Caco-2 (cell line): ENCODE measurements at regions of chr3 and their contacts with region 1.

Region 1: DNA sequence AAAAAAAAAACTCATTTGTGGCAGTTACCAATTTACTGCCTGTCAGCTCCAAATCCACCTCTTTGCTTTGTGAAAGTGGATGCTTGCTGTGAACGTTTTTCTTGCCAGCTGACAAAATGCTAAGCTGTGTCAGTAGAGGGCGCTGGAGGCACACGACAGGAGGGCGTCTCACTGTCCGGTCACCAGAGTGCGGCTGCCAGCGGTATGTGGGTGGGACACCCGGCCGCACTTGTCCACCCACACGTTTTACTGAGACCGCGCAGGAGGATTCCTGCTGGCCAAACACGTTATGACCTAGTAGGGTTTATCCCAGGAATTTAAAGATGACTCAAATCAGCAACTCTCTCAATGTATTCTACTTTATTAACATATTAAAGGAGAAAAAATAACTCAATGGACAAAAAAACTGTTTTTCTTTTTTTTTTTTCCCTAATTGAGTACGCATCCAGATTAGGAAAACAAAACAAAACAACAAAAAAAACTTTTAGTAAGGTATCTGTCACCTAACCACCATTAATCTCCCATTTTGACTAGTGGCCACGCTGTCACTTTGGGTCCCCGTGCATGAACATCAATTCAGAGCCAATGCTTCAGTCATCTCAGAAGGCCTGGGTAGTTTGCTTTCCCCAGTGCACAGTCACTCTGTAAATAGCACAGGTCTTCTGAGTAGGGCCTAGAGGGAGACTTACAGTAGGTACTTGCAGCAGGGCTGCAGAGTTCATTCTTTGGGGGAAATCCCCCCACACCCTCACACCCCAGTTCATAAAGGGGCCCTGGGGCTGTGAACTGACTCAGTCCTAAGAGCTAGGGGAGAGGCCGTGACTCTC is 43.8 kb upstream of the RPL35A start:
- DNase-seq: peak; percentile 88 to 89
- H3K4me3 ChIP-seq: no peak overlapping the region
- H3K4me3 Mint-ChIP-seq: no peak overlapping the region
- H3K27ac Mint-ChIP-seq: no peak overlapping the region
- H3K4me1 ChIP-seq: no peaks in the 10 kb centered on the region
- H3K4me1 Mint-ChIP-seq: no peaks in the 10 kb centered on the region
- H3K27me3 ChIP-seq: no peaks in the 10 kb centered on the region
- H3K27me3 Mint-ChIP-seq: no peaks in the 10 kb centered on the region
- CTCF ChIP-seq: peak; percentile 88 to 92

Region 2: GRCh38 chr3:197580253-197580691 is 326.0 kb before region 1 on chr3:
- CTCF ChIA-PET with region 1: no interaction called
- POLR2A ChIA-PET with region 1: no interaction called
- intact Hi-C with region 1: no loop called
- DNase-seq: no peak
- H3K4me3 ChIP-seq: no peak overlapping the region
- H3K4me3 Mint-ChIP-seq: no peak overlapping the region
- H3K27ac Mint-ChIP-seq: no peak overlapping the region
- H3K4me1 ChIP-seq: peaks cover 15% of the 10 kb centered on the region
- H3K4me1 Mint-ChIP-seq: no peaks in the 10 kb centered on the region
- H3K27me3 ChIP-seq: no peaks in the 10 kb centered on the region
- H3K27me3 Mint-ChIP-seq: no peaks in the 10 kb centered on the region
- CTCF ChIP-seq: no peak

Region 3: DNA sequence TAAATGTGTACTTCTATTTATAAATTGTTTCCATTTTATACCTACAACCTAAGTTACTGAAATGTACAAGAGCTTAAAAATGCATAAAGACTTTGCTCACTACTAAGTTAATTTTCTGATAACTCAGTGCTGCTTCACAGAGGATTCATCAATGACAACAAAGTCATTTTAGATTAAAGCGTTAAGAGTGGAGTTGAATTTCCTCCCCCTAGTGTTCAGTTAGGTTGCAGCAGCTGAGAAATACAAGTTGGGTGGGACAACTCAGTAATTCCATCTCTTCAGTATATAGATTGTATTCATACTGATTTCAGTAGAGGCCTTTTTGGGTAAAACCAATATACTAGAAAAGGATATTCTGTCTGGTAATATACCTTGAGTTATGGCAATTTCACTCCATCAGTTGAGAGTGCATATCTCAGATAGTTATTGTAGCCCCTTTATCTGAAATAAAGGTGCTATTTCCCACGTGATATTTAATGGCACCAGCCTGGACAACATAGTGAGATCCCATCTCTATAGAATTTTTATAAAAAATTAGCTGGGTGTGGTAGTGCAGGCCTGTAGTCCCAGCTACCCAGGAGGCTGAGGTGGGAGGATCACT is 36.8 kb after region 1 on chr3:
- CTCF ChIA-PET with region 1: interaction called, 7 read pairs
- POLR2A ChIA-PET with region 1: no interaction called
- intact Hi-C with region 1: loop called (anchors 1 kb)
- DNase-seq: peak in 1 of 2 experiments; percentile 44
- H3K4me3 ChIP-seq: no peak overlapping the region
- H3K4me3 Mint-ChIP-seq: no peak overlapping the region
- H3K27ac Mint-ChIP-seq: no peak overlapping the region
- H3K4me1 ChIP-seq: no peaks in the 10 kb centered on the region
- H3K4me1 Mint-ChIP-seq: no peaks in the 10 kb centered on the region
- H3K27me3 ChIP-seq: no peaks in the 10 kb centered on the region
- H3K27me3 Mint-ChIP-seq: peaks cover 3% of the 10 kb centered on the region
- CTCF ChIP-seq: peak; percentile 69 to 75

Region 4: DNA sequence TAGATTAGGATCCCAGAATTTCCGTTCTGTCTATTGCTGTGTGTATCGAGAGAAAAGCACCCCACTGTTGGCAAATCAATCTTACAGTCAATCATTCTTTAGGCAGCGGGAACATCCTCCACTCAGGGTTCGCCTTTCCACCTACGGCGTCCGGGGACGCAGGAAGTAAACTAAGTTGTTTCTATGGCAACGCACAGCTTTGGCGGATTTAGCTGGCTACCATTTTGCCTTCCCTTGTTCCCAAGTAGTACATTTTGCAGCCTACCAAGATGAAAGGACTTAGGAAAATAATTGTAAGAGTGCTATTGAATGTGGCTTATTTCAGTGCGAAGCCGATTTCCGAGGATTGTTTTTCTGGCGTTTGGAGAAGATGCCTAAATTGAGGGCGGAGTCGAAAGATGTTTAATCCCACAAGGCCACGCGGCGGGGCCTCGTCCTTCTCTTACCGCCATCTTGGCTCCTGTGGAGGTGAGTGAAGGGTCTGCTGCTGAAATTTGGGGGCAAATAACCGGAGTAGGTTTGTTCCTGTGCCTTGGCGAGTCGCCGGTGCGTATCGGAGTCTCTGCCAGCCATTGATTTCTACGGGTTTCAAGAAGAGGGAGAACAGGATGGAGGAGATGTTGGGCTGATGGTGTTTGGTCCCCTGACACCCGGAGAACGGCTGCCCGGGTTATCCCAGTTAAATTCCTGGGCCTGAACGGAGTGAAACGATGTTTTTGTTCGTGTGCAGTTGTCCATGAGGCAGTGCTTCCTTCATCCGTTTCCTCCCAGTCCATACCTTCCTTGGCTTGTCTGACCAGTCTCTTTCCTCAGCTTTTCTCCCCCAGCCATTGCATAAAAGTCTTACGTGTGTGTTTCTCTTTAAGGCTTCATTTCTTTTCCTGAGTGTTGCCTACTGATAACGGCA is 43.8 kb after region 1 on chr3 and contains the start of gene RPL35A:
- CTCF ChIA-PET with region 1: interaction called, 6 read pairs
- POLR2A ChIA-PET with region 1: no interaction called
- intact Hi-C with region 1: loop called (anchors 2 kb)
- DNase-seq: peak; percentile 90 to 91
- H3K4me3 ChIP-seq: peak within 1 kb of the TSS; percentile 60
- H3K4me3 Mint-ChIP-seq: peak within 1 kb of the TSS; percentile 98
- H3K27ac Mint-ChIP-seq: peak within 1 kb of the TSS; percentile 100
- H3K4me1 ChIP-seq: peaks cover 8% of the 10 kb centered on the region; the same call in 1 of the 2 replicates
- H3K4me1 Mint-ChIP-seq: peaks cover 8% of the 10 kb centered on the region
- H3K27me3 ChIP-seq: no peaks in the 10 kb centered on the region
- H3K27me3 Mint-ChIP-seq: no peaks in the 10 kb centered on the region
- CTCF ChIP-seq: no peak
- total RNA-seq, gene RPL35A: 880 and 900 TPM in 2 replicates

Region 5: GRCh38 chr3:198051836-198052235 is 145.6 kb after region 1 on chr3:
- CTCF ChIA-PET with region 1: no interaction called
- POLR2A ChIA-PET with region 1: no interaction called
- intact Hi-C with region 1: loop called (anchors 5 kb)
- DNase-seq: no peak
- H3K4me3 ChIP-seq: no peak overlapping the region
- H3K4me3 Mint-ChIP-seq: no peak overlapping the region
- H3K27ac Mint-ChIP-seq: no peak overlapping the region
- H3K4me1 ChIP-seq: no peaks in the 10 kb centered on the region
- H3K4me1 Mint-ChIP-seq: no peaks in the 10 kb centered on the region
- H3K27me3 ChIP-seq: no peaks in the 10 kb centered on the region
- H3K27me3 Mint-ChIP-seq: peaks cover 8% of the 10 kb centered on the region
- CTCF ChIP-seq: no peak